ENCODE measurements at regions of chr13 and their contacts with region 1.

Region 1: GRCh38 chr13:36818804-36819738 is at the start of gene RFXAP:
- DNase-seq: peak; percentile 96
- H3K4me3 ChIP-seq: peak within 1 kb of the TSS; percentile 77
- H3K27ac ChIP-seq: peak within 1 kb of the TSS; percentile 63
- H3K4me1 ChIP-seq: peaks cover 32% of the 10 kb centered on the region
- CTCF ChIP-seq: no peak
- total RNA-seq, gene RFXAP: 10.0 and 11.8 TPM in 2 replicates

Region 2: DNA sequence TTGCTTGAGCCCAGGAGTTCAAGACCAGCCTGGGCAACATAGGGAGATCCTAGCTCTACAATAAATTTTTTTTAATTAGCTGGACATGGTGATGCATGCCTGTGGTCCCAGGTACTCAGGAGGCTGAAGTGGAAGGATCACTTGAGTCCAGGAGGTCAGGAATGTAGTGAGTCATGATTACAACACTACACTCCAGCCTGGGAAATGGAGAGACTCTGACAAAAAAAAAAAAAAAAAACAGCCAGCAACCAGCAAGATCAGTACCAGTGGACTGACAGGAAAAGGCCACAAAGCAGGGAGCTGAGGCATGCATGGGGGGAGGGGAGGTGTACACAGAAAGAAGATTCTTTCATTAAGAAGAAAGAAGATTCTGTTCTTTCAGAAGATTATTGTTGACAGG is 52.8 kb before region 1 on chr13:
- CTCF ChIA-PET with region 1: no interaction called
- POLR2A ChIA-PET with region 1: no interaction called
- intact Hi-C with region 1: no loop called
- DNase-seq: no peak
- H3K4me3 ChIP-seq: no peak overlapping the region
- H3K27ac ChIP-seq: no peak overlapping the region
- H3K4me1 ChIP-seq: no peaks in the 10 kb centered on the region
- CTCF ChIP-seq: no peak

Region 3: DNA sequence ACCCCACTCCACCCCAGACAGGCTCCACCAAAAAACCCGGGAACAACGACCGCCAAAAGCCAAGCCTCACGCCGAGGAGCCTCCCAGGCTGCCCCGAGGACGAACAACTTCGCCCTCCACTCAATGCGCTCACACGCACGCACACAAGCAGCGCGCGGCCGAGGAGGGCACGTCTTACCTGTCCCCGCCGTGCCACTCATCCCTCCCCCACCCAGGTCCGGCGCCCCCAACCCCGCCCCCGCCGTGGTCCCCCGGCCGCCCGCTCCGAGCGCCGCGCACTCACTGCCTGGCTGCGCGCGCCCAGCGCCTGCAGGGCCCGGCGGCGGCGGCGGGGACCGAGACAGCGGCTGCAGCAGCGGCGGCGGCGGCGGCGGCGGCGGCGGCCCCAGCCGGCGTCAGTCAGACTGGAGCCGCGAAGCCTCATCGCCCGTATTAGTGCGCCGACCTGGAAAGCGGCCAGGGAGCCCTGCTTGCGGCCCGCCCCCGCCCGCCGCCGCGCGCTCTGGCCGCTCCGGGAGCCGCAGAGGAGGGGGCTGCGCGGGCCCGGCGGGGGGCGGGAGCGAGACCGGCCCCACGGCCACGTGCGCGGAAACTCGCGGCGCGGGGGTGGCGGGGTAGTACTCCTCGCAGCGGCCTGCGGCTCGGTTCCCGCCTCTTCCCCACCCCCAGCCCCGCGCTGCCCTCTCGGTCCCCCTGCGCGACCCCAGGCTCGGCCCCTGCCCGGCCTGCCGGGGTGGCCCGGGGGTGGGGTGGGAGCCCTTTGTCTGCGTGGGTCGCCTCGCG is 101.0 kb after region 1 on chr13 and contains the start of gene SMAD9:
- CTCF ChIA-PET with region 1: interaction called, 3 read pairs
- POLR2A ChIA-PET with region 1: no interaction called
- intact Hi-C with region 1: loop called (anchors 2 kb)
- DNase-seq: peak; percentile 73
- H3K4me3 ChIP-seq: peak within 1 kb of the TSS; percentile 84
- H3K27ac ChIP-seq: peak within 1 kb of the TSS; percentile 79
- H3K4me1 ChIP-seq: peaks cover 85% of the 10 kb centered on the region
- CTCF ChIP-seq: no peak
- total RNA-seq, gene SMAD9: 9.7 and 10.8 TPM in 2 replicates

Measured in OCI-LY7 (cell line).